ENCODE measurements at regions of chr1 and their contacts with region 1.

Region 1: GRCh38 chr1:28505406-28506187 is at the start of gene RCC1:
- DNase-seq: peak; percentile 86 to 99 (median 92)
- ATAC-seq: peak; percentile 92
- H3K4me3 ChIP-seq: peak within 1 kb of the TSS; percentile 86
- H3K4me3 Mint-ChIP-seq: peak within 1 kb of the TSS; percentile 94
- H3K27ac ChIP-seq: peak within 1 kb of the TSS; percentile 65 to 79
- H3K27ac Mint-ChIP-seq: peak within 1 kb of the TSS; percentile 88
- H3K4me1 ChIP-seq: peaks cover 38% of the 10 kb centered on the region
- H3K4me1 Mint-ChIP-seq: peaks cover 49% of the 10 kb centered on the region
- H3K27me3 ChIP-seq: no peaks in the 10 kb centered on the region
- H3K27me3 Mint-ChIP-seq: no peaks in the 10 kb centered on the region
- CTCF ChIP-seq: no peak
- total RNA-seq, gene RCC1: 8.5 to 9.9 TPM

Region 2: GRCh38 chr1:28369371-28370238 is 136.0 kb before region 1 on chr1 and contains the start of gene PHACTR4:
- CTCF ChIA-PET with region 1: no interaction called
- POLR2A ChIA-PET with region 1: interaction called, 4 read pairs
- intact Hi-C with region 1: loop called in 1 of 2 experiments (anchors 5 kb)
- DNase-seq: peak; percentile 53 to 90 (median 68)
- ATAC-seq: peak; percentile 88
- H3K4me3 ChIP-seq: peak within 1 kb of the TSS; percentile 97
- H3K4me3 Mint-ChIP-seq: peak within 1 kb of the TSS; percentile 94
- H3K27ac ChIP-seq: peak within 1 kb of the TSS; percentile 69 to 81
- H3K27ac Mint-ChIP-seq: peak within 1 kb of the TSS; percentile 84
- H3K4me1 ChIP-seq: peaks cover 25% of the 10 kb centered on the region
- H3K4me1 Mint-ChIP-seq: peaks cover 35% of the 10 kb centered on the region
- H3K27me3 ChIP-seq: no peaks in the 10 kb centered on the region
- H3K27me3 Mint-ChIP-seq: no peaks in the 10 kb centered on the region
- CTCF ChIP-seq: no peak
- total RNA-seq, gene PHACTR4: 26.0 to 26.3 TPM

Region 3: DNA sequence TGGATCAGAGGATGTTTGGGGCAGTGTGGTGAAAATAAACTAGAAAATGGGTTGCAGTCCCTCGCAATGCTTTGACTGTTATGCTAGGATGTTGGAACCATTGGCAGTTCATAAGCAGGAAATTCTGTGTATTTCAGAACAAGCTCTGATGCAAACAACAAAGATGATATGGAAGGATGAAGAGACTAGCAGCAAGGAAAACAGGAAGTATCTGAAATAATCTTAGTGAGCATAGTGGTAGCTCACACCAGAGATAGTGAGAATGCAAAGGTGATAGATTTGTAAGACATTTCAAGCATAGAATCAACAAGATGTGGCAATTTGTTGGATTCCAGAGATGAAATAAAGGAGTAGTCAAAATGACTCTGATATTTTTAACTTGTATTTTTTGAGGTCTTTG is 10.9 kb before region 1 on chr1:
- CTCF ChIA-PET with region 1: no interaction called
- POLR2A ChIA-PET with region 1: interaction called, 15 read pairs
- intact Hi-C with region 1: no loop called
- DNase-seq: no peak
- ATAC-seq: no peak
- H3K4me3 ChIP-seq: no peak overlapping the region
- H3K4me3 Mint-ChIP-seq: no peak overlapping the region
- H3K27ac ChIP-seq: peak overlapping the region in 1 of 2 donors; percentile 19
- H3K27ac Mint-ChIP-seq: peak overlapping the region; percentile 85
- H3K4me1 ChIP-seq: no peaks in the 10 kb centered on the region
- H3K4me1 Mint-ChIP-seq: peaks cover 9% of the 10 kb centered on the region
- H3K27me3 ChIP-seq: no peaks in the 10 kb centered on the region
- H3K27me3 Mint-ChIP-seq: no peaks in the 10 kb centered on the region
- CTCF ChIP-seq: no peak

Region 4: DNA sequence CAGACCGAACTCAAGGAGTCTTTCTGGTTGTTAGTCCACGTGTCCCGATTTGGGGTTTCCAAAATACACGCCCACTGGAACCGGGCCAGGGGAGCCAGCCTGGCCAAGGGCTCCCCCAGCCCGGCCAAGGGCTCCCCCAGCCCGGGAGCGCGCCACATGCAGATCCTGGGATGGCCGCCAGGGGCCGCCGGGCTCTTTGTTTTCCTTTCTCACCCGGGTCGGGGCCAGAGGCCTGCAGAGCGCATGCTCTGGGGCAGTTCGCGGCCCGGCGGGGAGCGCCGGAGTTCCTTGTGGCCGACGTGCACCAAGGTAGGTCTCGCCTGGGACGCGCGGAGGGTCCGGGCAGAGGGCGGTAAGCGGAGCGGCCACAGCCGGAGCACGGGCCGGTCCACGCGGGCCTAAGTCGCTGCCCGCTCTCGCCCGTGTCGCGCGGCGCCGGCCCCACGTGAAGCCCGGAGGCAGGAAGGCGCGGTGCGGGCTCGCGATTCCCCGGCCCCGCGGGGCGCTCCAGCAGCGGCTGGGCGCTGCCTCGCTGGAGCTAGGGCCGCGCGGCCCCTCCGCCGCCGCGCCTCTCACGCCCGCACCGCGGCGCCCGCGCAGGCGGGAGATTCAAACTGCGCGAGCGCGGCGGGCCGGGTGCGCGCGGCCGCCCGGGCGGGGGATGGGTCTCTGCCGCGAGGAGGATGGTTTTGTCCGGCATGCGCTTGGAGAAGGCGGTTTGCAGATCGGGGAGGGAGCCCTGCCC is 12.6 kb after region 1 on chr1:
- CTCF ChIA-PET with region 1: interaction called, 7 read pairs
- POLR2A ChIA-PET with region 1: interaction called, 32 read pairs
- intact Hi-C with region 1: loop called in 1 of 2 experiments (anchors 1 kb)
- DNase-seq: peak; percentile 80 to 93 (median 86)
- ATAC-seq: peak; percentile 90
- H3K4me3 ChIP-seq: peak overlapping the region; percentile 66
- H3K4me3 Mint-ChIP-seq: peak overlapping the region; percentile 91
- H3K27ac ChIP-seq: peak overlapping the region; percentile 23 to 29
- H3K27ac Mint-ChIP-seq: peak overlapping the region; percentile 83
- H3K4me1 ChIP-seq: peaks cover 24% of the 10 kb centered on the region
- H3K4me1 Mint-ChIP-seq: peaks cover 33% of the 10 kb centered on the region
- H3K27me3 ChIP-seq: no peaks in the 10 kb centered on the region
- H3K27me3 Mint-ChIP-seq: no peaks in the 10 kb centered on the region
- CTCF ChIP-seq: peak; percentile 94

Region 5: GRCh38 chr1:28552758-28553663 is 47.4 kb after region 1 on chr1 and contains the start of gene TRNAU1AP:
- CTCF ChIA-PET with region 1: interaction called, 3 read pairs
- POLR2A ChIA-PET with region 1: interaction called, 11 read pairs
- intact Hi-C with region 1: loop called (anchors 1 to 5 kb)
- DNase-seq: peak; percentile 94 to 99 (median 96)
- ATAC-seq: peak; percentile 95
- H3K4me3 ChIP-seq: peak within 1 kb of the TSS; percentile 84
- H3K4me3 Mint-ChIP-seq: peak within 1 kb of the TSS; percentile 99
- H3K27ac ChIP-seq: peak within 1 kb of the TSS; percentile 66 to 68
- H3K27ac Mint-ChIP-seq: peak within 1 kb of the TSS; percentile 99
- H3K4me1 ChIP-seq: peaks cover 22% of the 10 kb centered on the region
- H3K4me1 Mint-ChIP-seq: peaks cover 31% of the 10 kb centered on the region
- H3K27me3 ChIP-seq: no peaks in the 10 kb centered on the region
- H3K27me3 Mint-ChIP-seq: no peaks in the 10 kb centered on the region
- CTCF ChIP-seq: no peak
- total RNA-seq, gene TRNAU1AP: 21.4 to 24.2 TPM

Region 6: DNA sequence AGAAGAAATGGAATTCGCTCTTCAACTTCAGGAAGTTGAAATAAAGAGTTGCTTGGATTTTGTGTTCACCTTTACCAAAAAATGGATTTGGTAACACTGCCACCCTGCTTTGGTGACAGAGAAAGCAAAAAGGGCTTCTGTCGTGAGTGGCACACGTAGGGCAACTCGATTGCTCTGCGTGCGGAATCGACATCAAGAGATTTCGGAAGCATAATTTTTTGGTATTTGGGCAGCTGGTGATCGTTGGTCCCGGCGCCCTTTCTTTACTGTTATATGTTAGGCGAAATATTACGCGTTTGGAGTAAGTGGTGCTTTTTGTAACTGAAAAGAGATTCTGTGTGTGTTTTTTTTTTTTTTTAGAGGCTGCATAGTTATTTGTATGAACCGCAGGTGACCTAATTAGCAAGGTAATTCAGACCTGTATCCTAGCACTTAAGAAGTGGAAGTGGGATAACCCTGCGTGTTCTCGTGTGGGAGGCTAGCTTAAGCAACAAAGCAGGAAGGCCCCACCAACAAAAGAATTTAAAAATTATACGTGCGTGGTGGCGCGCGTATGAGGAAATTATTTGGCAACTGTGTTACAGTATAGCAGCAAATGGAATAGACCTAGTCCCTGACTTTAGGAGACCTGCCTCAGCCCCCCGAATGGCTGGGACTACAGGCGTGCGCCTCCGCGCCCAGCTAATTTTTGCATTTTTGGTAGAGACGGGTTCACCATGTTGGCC is 143.0 kb after region 1 on chr1 and contains the start of gene RNU11:
- CTCF ChIA-PET with region 1: no interaction called
- POLR2A ChIA-PET with region 1: interaction called, 18 read pairs
- intact Hi-C with region 1: loop called in 1 of 2 experiments (anchors 5 kb)
- DNase-seq: peak; percentile 77 to 97 (median 85)
- ATAC-seq: peak; percentile 67
- H3K4me3 ChIP-seq: peak within 1 kb of the TSS; percentile 50
- H3K4me3 Mint-ChIP-seq: peak within 1 kb of the TSS; percentile 78
- H3K27ac ChIP-seq: peak within 1 kb of the TSS; percentile 88 to 93
- H3K27ac Mint-ChIP-seq: peak within 1 kb of the TSS; percentile 96
- H3K4me1 ChIP-seq: peaks cover 36% of the 10 kb centered on the region
- H3K4me1 Mint-ChIP-seq: peaks cover 32% of the 10 kb centered on the region
- H3K27me3 ChIP-seq: no peaks in the 10 kb centered on the region
- H3K27me3 Mint-ChIP-seq: no peaks in the 10 kb centered on the region
- CTCF ChIP-seq: no peak
- total RNA-seq, gene RNU11: not detected

Region 7: GRCh38 chr1:29368936-29369932 is 863.6 kb after region 1 on chr1:
- CTCF ChIA-PET with region 1: no interaction called
- POLR2A ChIA-PET with region 1: no interaction called
- intact Hi-C with region 1: no loop called
- DNase-seq: no peak
- ATAC-seq: no peak
- H3K4me3 ChIP-seq: no peak overlapping the region
- H3K4me3 Mint-ChIP-seq: no peak overlapping the region
- H3K27ac ChIP-seq: no peak overlapping the region
- H3K27ac Mint-ChIP-seq: no peak overlapping the region
- H3K4me1 ChIP-seq: no peaks in the 10 kb centered on the region
- H3K4me1 Mint-ChIP-seq: no peaks in the 10 kb centered on the region
- H3K27me3 ChIP-seq: peaks cover 0 to 7% of the 10 kb centered on the region in 2 experiments
- H3K27me3 Mint-ChIP-seq: peaks cover 61% of the 10 kb centered on the region
- CTCF ChIP-seq: no peak